ENCODE measurements at regions of chr1 and their contacts with region 1.

Region 1: GRCh38 chr1:41812051-41812450 is 106.7 kb downstream of the HIVEP3 start:
- H3K4me3 Mint-ChIP-seq: no peak overlapping the region
- H3K27ac Mint-ChIP-seq: no peak overlapping the region
- H3K4me1 Mint-ChIP-seq: peaks cover 39% of the 10 kb centered on the region
- H3K27me3 Mint-ChIP-seq: no peaks in the 10 kb centered on the region

Region 2: GRCh38 chr1:41842993-41843755 is 31.1 kb after region 1 on chr1:
- intact Hi-C with region 1: no loop called
- H3K4me3 Mint-ChIP-seq: no peak overlapping the region
- H3K27ac Mint-ChIP-seq: no peak overlapping the region
- H3K4me1 Mint-ChIP-seq: peaks cover 24% of the 10 kb centered on the region
- H3K27me3 Mint-ChIP-seq: peaks cover 3% of the 10 kb centered on the region

Region 3: DNA sequence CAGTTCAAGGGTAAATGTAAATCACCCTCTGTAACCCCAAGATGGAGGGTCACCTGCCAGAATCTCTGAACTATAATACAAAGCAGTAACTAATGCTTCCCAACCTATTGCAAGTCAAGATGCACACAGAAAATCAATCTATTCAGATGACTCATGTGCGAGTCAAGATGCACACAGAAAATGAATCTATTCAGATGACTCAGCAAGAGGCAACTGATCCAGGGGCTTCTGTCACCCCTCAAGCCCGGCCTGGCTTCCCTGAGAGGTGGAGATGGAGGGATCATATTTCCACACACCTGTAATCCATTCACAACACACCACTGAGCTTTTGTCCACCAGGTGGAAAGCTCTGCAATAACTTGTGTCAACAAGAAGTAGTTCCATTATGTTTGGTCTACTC is 124.1 kb after region 1 on chr1:
- intact Hi-C with region 1: no loop called
- H3K4me3 Mint-ChIP-seq: no peak overlapping the region
- H3K27ac Mint-ChIP-seq: no peak overlapping the region
- H3K4me1 Mint-ChIP-seq: peaks cover 9% of the 10 kb centered on the region
- H3K27me3 Mint-ChIP-seq: peaks cover 4% of the 10 kb centered on the region

Region 4: GRCh38 chr1:42035830-42036604 is 224.0 kb after region 1 on chr1:
- intact Hi-C with region 1: loop called (anchors 10 kb)
- H3K4me3 Mint-ChIP-seq: peak overlapping the region; percentile 73
- H3K27ac Mint-ChIP-seq: no peak overlapping the region
- H3K4me1 Mint-ChIP-seq: peaks cover 11% of the 10 kb centered on the region
- H3K27me3 Mint-ChIP-seq: peaks cover 19% of the 10 kb centered on the region